ENCODE measurements at regions of chr12 and their contacts with region 1.

Region 1: DNA sequence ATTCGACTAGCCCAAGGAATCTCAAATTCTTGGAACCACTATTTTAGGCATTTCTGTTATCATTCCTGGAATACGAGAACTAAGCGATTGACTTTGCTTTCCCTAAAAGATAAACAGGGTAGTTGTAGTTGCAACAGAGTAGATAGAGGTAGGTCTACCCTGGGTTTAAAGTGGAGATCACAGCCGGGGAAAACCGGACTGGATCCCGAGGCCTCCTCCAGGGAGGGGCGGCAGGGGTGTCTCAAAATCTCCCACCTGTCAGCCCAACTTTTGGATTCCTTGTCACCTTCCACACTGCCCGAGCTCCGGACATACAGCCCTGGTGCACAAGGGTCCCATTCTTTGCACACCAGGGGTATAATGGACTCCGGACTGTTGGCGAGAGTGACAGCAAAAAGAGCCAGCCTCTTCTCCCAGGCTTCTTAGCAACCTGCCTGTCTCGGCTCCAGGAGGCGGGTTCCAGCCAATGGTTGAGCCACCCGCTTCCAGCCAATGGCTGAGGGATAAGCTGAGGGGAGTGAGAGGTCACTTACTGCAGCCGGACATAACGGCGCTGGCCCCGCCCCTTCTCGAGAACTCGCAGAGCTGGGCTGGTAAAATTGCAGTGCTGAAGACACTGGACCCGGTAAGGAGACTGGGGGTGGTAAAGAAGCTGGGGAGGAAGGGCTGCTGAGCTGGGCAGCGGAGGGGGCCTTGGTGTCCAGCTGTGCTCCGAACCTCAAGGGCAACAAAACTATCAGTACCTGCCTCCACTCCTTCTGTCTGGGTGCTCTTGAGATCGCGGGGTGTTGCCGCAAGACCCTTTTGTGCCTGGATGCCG is at the start of gene SUOX:
- DNase-seq: peak; percentile 96 to 99 (median 99)
- H3K4me3 ChIP-seq: peak within 1 kb of the TSS; percentile 37 to 87 (median 64)
- H3K27ac ChIP-seq: peak within 1 kb of the TSS; percentile 61 to 90 (median 84)
- H3K4me1 ChIP-seq: peaks cover 10 to 20% of the 10 kb centered on the region in 2 donors
- H3K27me3 ChIP-seq: no peaks in the 10 kb centered on the region
- CTCF ChIP-seq: no peak
- POLR2A ChIP-seq: peak; percentile 44 to 88
- total RNA-seq, gene SUOX: 49.3 to 72.6 (median 56.6) TPM

Region 2: DNA sequence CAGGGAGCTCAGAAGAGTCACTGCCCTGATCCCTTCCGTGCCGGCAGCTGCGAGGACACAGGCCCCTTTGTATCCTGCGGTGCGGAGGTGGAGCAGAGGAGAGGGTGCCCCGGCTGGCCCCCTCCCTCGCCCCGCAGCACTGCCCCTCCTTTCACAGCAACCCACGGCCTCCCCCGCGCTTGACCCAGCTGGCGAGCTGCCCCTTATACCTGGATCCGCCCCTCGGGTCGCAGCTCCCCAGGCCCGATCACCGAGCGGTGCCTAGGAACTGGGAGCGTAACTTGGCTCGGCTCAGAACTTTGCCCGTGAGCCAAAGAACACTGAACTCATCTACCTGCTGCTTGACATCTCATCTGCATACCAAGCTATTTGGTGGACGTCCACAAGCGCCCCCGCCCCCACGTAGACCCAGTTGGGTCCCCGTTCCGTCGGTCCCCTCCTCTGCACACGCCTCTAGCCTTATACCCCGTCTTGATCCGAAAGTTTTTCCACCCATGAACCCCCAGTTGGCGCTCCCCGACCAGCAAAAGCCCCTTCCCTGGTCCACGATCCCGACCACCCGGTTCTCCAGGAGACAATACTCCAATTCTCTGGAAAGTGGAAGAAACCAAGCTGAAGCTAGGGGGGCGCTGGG is 166.8 kb before region 1 on chr12:
- intact Hi-C with region 1: no loop called
- DNase-seq: peak in 6 of 7 donors; percentile 43 to 72 (median 60)
- H3K4me3 ChIP-seq: peak overlapping the region; percentile 34 to 98 (median 77)
- H3K27ac ChIP-seq: peak overlapping the region; percentile 70 to 92 (median 85)
- H3K4me1 ChIP-seq: peaks cover 24 to 46% of the 10 kb centered on the region in 2 donors
- H3K27me3 ChIP-seq: no peaks in the 10 kb centered on the region
- CTCF ChIP-seq: no peak
- POLR2A ChIP-seq: no peak

Region 3: GRCh38 chr12:56029666-56030293 is 32.9 kb after region 1 on chr12:
- intact Hi-C with region 1: loop called (anchors 5 kb)
- DNase-seq: peak in 6 of 7 donors; percentile 59 to 70 (median 65)
- H3K4me3 ChIP-seq: no peak overlapping the region
- H3K27ac ChIP-seq: peak overlapping the region in 4 of 5 donors; percentile 61 to 76 (median 73)
- H3K4me1 ChIP-seq: peaks cover 10 to 13% of the 10 kb centered on the region in 2 donors
- H3K27me3 ChIP-seq: no peaks in the 10 kb centered on the region
- CTCF ChIP-seq: peak; percentile 53 to 69 (median 66)
- POLR2A ChIP-seq: no peak

Region 4: GRCh38 chr12:56413392-56413791 is 416.5 kb after region 1 on chr12:
- intact Hi-C with region 1: no loop called
- DNase-seq: no peak
- H3K4me3 ChIP-seq: no peak overlapping the region
- H3K27ac ChIP-seq: no peak overlapping the region
- H3K4me1 ChIP-seq: no peaks in the 10 kb centered on the region
- H3K27me3 ChIP-seq: no peaks in the 10 kb centered on the region
- CTCF ChIP-seq: no peak
- POLR2A ChIP-seq: no peak

Measured in adrenal gland (tissue), 19 donors.